Testis (tissue), 5 donors: ENCODE measurements at regions of chr7 and their contacts with region 1.

Region 1: DNA sequence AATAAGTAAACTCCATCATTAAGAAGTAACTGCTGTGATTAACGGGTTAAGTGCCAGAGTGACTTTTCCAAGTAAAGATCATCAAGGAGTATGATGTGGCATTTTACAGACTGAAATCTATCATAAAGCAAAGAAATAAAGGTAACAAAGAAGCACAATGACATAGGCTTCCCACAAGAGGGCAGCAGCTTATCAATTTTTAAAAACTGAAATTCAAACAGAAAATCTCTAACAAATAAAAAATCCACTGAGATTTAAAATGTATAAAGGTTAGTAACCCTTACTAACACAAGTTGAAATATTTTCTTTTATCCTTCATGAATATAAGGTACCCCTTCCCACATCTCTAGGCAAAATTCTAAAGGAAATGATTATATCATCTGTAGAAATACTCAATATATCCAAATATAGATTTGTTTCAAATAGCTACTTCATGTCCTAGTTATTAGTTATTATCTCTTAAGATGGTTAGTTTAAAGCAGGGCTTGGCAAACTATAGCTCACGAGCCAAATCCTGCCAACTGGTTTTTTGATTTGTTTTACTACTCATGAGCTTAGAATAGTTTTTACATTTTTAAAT is 29.2 kb downstream of the FAM3C start:
- DNase-seq: no peak
- H3K4me3 ChIP-seq: no peak overlapping the region
- H3K27ac ChIP-seq: no peak overlapping the region
- H3K4me1 ChIP-seq: no peaks in the 10 kb centered on the region
- H3K27me3 ChIP-seq: no peaks in the 10 kb centered on the region
- CTCF ChIP-seq: peak; percentile 45 to 72 (median 48)
- POLR2A ChIP-seq: no peak

Region 2: DNA sequence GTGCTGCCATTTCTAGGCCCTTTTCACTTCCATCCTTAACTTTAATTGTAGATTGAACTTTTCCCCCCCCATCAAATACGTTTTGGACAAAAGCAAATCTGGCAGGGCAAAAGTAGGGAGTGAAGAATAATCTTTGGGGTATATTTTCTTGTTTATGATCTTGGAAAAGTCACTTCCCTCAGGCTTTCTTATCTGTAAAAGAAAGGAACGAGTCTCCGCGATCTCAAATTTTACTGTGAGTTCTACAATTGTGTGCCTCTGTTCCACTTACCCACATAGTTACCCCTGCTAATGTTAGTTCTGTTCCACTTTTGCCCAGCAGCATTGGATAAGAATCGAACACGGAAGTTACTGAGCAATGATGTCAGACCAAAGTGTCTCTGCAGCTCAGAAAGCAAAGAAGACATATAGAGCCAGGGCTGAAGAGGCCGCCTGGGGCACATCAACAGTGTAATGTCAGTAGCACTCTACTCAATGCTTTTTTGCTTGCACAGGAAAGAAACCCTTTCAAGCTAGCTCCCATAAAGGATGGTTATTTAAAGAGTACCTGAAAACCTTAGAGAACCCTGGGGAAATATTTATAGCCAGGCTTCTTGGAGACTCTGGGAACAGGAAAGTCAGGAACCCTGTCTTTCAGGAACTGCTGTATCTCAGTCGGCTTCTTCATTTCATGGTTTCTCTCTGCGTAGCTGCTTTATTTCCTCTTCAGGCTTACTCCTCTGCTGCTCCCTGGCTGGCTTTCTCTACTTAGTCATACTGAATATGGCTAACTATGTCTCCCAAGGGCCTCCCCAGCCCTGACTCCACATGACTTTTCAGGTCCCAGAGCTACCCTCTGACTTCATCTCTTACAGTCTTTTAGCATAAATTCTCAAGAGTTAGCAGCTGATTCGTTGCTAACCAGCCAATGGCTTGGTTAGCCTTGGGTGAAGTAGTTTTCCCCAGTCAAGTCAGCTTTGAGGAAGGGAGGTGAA is 152.9 kb after region 1 on chr7:
- intact Hi-C with region 1: no loop called
- DNase-seq: no peak
- H3K4me3 ChIP-seq: no peak overlapping the region
- H3K27ac ChIP-seq: no peak overlapping the region
- H3K4me1 ChIP-seq: no peaks in the 10 kb centered on the region
- H3K27me3 ChIP-seq: no peaks in the 10 kb centered on the region
- CTCF ChIP-seq: no peak
- POLR2A ChIP-seq: no peak

Region 3: GRCh38 chr7:121547544-121548092 is 180.7 kb after region 1 on chr7:
- intact Hi-C with region 1: loop called (anchors 5 kb)
- DNase-seq: no peak
- H3K4me3 ChIP-seq: no peak overlapping the region
- H3K27ac ChIP-seq: no peak overlapping the region
- H3K4me1 ChIP-seq: peaks cover 3% of the 10 kb centered on the region
- H3K27me3 ChIP-seq: no peaks in the 10 kb centered on the region
- CTCF ChIP-seq: peak; percentile 44 to 63 (median 55)
- POLR2A ChIP-seq: no peak